Natural killer cell (primary cell): ENCODE measurements at regions of chr5 and their contacts with region 1.

Region 1: GRCh38 chr5:72920690-72921502 is 34.9 kb upstream of the FCHO2 start:
- DNase-seq: peak in 1 of 2 donors; percentile 8
- ATAC-seq: no peak
- H3K4me3 ChIP-seq: no peak overlapping the region
- H3K4me3 Mint-ChIP-seq: no peak overlapping the region
- H3K27ac ChIP-seq: no peak overlapping the region
- H3K27ac Mint-ChIP-seq: no peak overlapping the region
- H3K4me1 ChIP-seq: no peaks in the 10 kb centered on the region
- H3K4me1 Mint-ChIP-seq: no peaks in the 10 kb centered on the region
- H3K27me3 ChIP-seq: no peaks in the 10 kb centered on the region
- H3K27me3 Mint-ChIP-seq: no peaks in the 10 kb centered on the region
- CTCF ChIP-seq: no peak

Region 2: GRCh38 chr5:73448463-73449136 is 527.7 kb after region 1 on chr5 and contains the start of gene FOXD1:
- intact Hi-C with region 1: loop called (anchors 10 kb)
- DNase-seq: peak; percentile 25 to 61
- ATAC-seq: peak; percentile 50 to 57 (median 56)
- H3K4me3 ChIP-seq: peak within 1 kb of the TSS; percentile 51
- H3K4me3 Mint-ChIP-seq: peak within 1 kb of the TSS; percentile 87
- H3K27ac ChIP-seq: no peak within 1 kb of the TSS
- H3K27ac Mint-ChIP-seq: peak within 1 kb of the TSS; percentile 44 to 50
- H3K4me1 ChIP-seq: peaks cover 24% of the 10 kb centered on the region
- H3K4me1 Mint-ChIP-seq: peaks cover 11 to 21% of the 10 kb centered on the region in 2 donors
- H3K27me3 ChIP-seq: peaks cover 81% of the 10 kb centered on the region
- H3K27me3 Mint-ChIP-seq: peaks cover 58 to 60% of the 10 kb centered on the region in 2 donors
- CTCF ChIP-seq: no peak
- total RNA-seq, gene FOXD1: 0.31 to 0.63 (median 0.41) TPM